Left colon (tissue), 2 donors: ENCODE measurements at regions of chr2 and their contacts with region 1.

Region 1: DNA sequence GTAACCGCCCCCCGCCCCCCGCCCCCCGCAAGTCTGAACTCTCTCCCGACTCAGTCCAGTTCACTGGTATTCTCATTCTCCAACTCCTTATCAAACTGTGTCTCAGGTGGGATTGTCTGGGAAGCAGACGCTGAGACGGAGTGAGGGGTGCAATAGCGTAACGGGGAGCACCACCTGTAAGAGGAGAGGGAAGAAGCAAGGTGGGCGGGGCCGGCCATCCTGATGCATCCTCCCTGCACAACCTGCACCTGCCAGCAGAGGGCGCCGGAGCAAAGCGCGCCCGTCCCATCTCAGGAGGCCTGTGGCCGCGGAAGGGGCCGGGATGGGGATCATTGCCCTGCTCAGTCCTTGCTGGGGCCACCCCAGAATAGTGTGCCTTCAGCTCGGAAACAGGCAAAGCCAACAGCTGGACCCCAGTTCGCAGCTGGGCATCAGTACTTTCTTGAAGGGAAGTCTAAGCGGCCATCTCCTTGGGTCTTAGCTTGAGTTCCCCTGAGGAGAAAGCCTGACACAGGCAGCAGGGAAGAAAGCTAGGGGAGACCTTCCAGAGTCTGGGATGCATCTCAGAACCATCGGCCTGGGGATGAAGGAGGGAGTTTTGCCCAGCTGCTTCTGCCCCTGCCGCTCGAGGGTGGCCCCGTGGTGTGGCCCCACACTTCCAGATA is 208.0 kb downstream of the TFCP2L1 start:
- DNase-seq: peak in 1 of 2 donors; percentile 82
- ATAC-seq: peak; percentile 80

Region 2: GRCh38 chr2:120330946-120331822 is 745.8 kb before region 1 on chr2:
- intact Hi-C with region 1: loop called in 1 of 2 experiments (anchors 10 kb)
- DNase-seq: no peak
- ATAC-seq: no peak

Region 3: GRCh38 chr2:120699292-120699691 is 377.7 kb before region 1 on chr2:
- intact Hi-C with region 1: loop called (anchors 5 kb)
- DNase-seq: no peak
- ATAC-seq: no peak